AG04449 (cell line): ENCODE measurements at regions of chr1 and their contacts with region 1.

Region 1: DNA sequence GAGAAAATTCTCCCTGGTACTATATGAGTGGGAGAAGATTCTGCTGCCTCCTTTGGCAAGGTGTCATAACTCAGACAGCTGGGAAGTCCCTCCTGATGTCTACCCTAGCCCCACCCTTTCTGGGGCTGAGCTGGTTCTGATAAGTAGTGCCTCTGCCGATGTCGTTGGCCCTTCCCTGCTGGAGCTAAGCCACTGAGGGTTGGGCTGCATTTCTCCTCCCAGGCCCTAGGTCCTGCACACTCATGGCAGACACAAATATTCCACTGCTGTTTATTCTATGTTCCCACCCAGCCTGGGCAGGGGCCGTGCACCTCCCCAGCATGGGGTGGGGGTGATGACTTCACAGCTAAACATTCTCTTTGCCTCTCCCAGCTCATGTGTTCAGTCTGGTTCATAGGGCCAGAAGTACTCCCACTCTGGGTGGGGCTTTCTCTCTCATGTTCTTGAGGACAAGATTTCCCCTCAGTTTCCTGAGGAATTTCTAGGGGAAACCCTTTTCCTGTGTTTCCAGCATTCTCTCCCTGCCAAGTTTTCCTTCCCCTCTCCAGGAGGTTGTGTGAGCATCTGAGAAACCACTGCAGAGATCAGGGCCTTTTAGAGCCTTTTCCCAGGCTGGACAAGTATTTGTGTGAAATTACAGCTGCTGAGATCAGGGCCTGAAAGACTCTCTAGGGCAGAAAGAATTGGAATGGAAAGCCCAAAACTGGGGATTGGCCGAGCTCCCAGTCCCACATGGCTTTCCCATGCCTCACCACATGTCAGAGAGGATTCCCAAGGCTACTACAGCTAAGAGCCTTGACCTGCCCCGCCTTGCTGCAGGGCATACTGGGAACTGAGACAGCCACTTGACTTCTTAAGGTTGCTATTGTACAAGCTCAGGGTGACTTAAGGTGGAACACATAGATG is 66.2 kb downstream of the ATP2B4 start:
- DNase-seq: peak; percentile 84
- H3K4me3 ChIP-seq: no peak overlapping the region
- CTCF ChIP-seq: no peak

Region 2: DNA sequence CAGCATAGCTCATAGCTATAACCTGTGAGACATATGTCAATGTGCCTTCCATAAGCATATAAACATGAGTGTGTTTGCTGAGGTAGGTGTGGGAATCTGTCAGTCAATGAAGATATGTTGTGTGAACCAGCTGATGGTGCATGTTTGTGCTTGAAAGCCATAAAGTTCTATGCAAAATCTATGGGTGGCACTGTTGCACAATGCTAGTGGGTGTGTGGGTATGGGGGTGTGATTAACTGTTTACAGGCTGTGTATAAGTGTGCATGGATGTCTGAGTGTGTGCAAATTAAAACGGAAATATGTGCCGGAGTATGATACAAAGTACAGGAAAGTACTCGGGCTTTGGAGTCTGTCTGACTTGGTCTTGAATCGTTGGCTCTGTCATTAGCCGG is 67.2 kb before region 1 on chr1:
- CTCF ChIA-PET with region 1: interaction called, 6 read pairs
- POLR2A ChIA-PET with region 1: interaction called, 19 read pairs
- DNase-seq: no peak
- H3K4me3 ChIP-seq: no peak overlapping the region
- CTCF ChIP-seq: no peak